Caco-2 (cell line): ENCODE measurements at regions of chr12 and their contacts with region 1.

Region 1: GRCh38 chr12:6965026-6965661 is 5.3 kb downstream of the PHB2 start:
- DNase-seq: peak; percentile 91 to 93
- H3K4me3 ChIP-seq: peak overlapping the region; percentile 64
- H3K4me3 Mint-ChIP-seq: peak overlapping the region; percentile 81
- H3K27ac Mint-ChIP-seq: peak overlapping the region; percentile 93
- H3K4me1 ChIP-seq: peaks cover 39% of the 10 kb centered on the region
- H3K4me1 Mint-ChIP-seq: peaks cover 37% of the 10 kb centered on the region
- H3K27me3 ChIP-seq: no peaks in the 10 kb centered on the region
- H3K27me3 Mint-ChIP-seq: no peaks in the 10 kb centered on the region
- CTCF ChIP-seq: peak; percentile 95 to 96

Region 2: GRCh38 chr12:6735448-6736191 is 229.5 kb before region 1 on chr12:
- CTCF ChIA-PET with region 1: no interaction called
- POLR2A ChIA-PET with region 1: no interaction called
- intact Hi-C with region 1: no loop called
- DNase-seq: peak; percentile 70 to 81
- H3K4me3 ChIP-seq: no peak overlapping the region
- H3K4me3 Mint-ChIP-seq: no peak overlapping the region
- H3K27ac Mint-ChIP-seq: peak overlapping the region; percentile 24
- H3K4me1 ChIP-seq: no peaks in the 10 kb centered on the region
- H3K4me1 Mint-ChIP-seq: peaks cover 8% of the 10 kb centered on the region
- H3K27me3 ChIP-seq: no peaks in the 10 kb centered on the region
- H3K27me3 Mint-ChIP-seq: no peaks in the 10 kb centered on the region
- CTCF ChIP-seq: peak; percentile 94

Region 3: GRCh38 chr12:6867413-6868210 is 97.5 kb before region 1 on chr12 and contains the start of gene TPI1:
- CTCF ChIA-PET with region 1: interaction called, 19 read pairs
- POLR2A ChIA-PET with region 1: interaction called, 3 read pairs
- intact Hi-C with region 1: no loop called
- DNase-seq: peak; percentile 88 to 92
- H3K4me3 ChIP-seq: peak within 1 kb of the TSS; percentile 97
- H3K4me3 Mint-ChIP-seq: peak within 1 kb of the TSS; percentile 95
- H3K27ac Mint-ChIP-seq: peak within 1 kb of the TSS; percentile 94
- H3K4me1 ChIP-seq: peaks cover 31% of the 10 kb centered on the region
- H3K4me1 Mint-ChIP-seq: peaks cover 47% of the 10 kb centered on the region
- H3K27me3 ChIP-seq: no peaks in the 10 kb centered on the region
- H3K27me3 Mint-ChIP-seq: no peaks in the 10 kb centered on the region
- CTCF ChIP-seq: no peak
- total RNA-seq, gene TPI1: 1,141 and 1,254 TPM in 2 replicates

Region 4: GRCh38 chr12:6890789-6891645 is 74.1 kb before region 1 on chr12:
- CTCF ChIA-PET with region 1: interaction called, 6 read pairs
- POLR2A ChIA-PET with region 1: no interaction called
- intact Hi-C with region 1: loop called (anchors 1 kb)
- DNase-seq: peak; percentile 98 to 100
- H3K4me3 ChIP-seq: peak overlapping the region; percentile 34
- H3K4me3 Mint-ChIP-seq: peak overlapping the region; percentile 80
- H3K27ac Mint-ChIP-seq: peak overlapping the region; percentile 96
- H3K4me1 ChIP-seq: peaks cover 37% of the 10 kb centered on the region
- H3K4me1 Mint-ChIP-seq: peaks cover 5% of the 10 kb centered on the region
- H3K27me3 ChIP-seq: no peaks in the 10 kb centered on the region
- H3K27me3 Mint-ChIP-seq: no peaks in the 10 kb centered on the region
- CTCF ChIP-seq: peak; percentile 82 to 95

Region 5: GRCh38 chr12:6937481-6938297 is 27.5 kb before region 1 on chr12:
- CTCF ChIA-PET with region 1: interaction called, 241 read pairs
- POLR2A ChIA-PET with region 1: interaction called, 9 read pairs
- intact Hi-C with region 1: no loop called
- DNase-seq: peak; percentile 97
- H3K4me3 ChIP-seq: peak overlapping the region; percentile 55
- H3K4me3 Mint-ChIP-seq: peak overlapping the region; percentile 73
- H3K27ac Mint-ChIP-seq: peak overlapping the region; percentile 92
- H3K4me1 ChIP-seq: peaks cover 10% of the 10 kb centered on the region
- H3K4me1 Mint-ChIP-seq: peaks cover 25% of the 10 kb centered on the region
- H3K27me3 ChIP-seq: no peaks in the 10 kb centered on the region
- H3K27me3 Mint-ChIP-seq: no peaks in the 10 kb centered on the region
- CTCF ChIP-seq: peak; percentile 98 to 99

Region 6: GRCh38 chr12:7018350-7019042 is 53.4 kb after region 1 on chr12 and contains the start of gene LPCAT3:
- CTCF ChIA-PET with region 1: interaction called, 10 read pairs
- POLR2A ChIA-PET with region 1: interaction called, 9 read pairs
- intact Hi-C with region 1: loop called (anchors 1 kb)
- DNase-seq: peak; percentile 99 to 100
- H3K4me3 ChIP-seq: peak within 1 kb of the TSS; percentile 65
- H3K4me3 Mint-ChIP-seq: peak within 1 kb of the TSS; percentile 88
- H3K27ac Mint-ChIP-seq: peak within 1 kb of the TSS; percentile 72
- H3K4me1 ChIP-seq: peaks cover 19% of the 10 kb centered on the region
- H3K4me1 Mint-ChIP-seq: peaks cover 22% of the 10 kb centered on the region
- H3K27me3 ChIP-seq: no peaks in the 10 kb centered on the region
- H3K27me3 Mint-ChIP-seq: no peaks in the 10 kb centered on the region
- CTCF ChIP-seq: peak; percentile 95 to 96
- total RNA-seq, gene LPCAT3: 142 and 155 TPM in 2 replicates

Region 7: DNA sequence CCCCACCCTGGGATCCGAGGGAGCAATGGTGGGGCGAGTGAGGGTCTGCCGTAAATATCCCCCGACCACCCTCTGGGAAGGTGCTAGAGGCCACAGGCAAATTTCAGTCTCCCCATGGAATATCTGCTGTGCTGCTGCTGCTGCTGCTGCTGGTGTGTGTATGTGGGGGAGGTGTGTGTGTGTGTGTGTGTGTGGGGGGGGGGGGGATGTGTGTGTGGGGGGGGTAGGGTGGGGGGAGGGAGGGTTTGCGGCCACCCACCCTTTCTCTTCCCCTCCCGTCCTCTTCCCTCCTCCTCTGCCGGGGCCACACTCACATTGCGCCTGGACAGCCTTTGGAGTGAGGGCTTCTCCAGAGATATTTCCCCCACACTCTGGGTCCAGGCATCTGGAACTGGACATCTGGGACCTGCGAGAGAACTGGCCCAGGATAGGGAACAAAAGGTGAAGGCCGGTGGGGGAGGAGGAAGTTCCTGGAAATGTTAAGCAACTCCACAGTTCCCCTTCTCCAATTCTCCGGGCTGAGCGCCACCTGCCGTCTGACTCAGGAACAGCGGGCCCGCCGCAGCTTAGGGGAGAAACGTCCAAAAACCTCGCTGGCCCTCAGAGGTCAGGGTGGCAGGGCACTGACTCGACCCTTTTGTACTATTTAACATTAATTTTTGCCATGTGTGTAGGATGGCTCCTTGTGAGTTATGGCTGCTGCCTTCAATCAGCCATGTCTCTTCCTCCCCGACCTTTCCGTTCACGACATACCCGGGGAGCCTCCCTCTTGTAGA is 143.8 kb after region 1 on chr12 and contains the start of gene C1RL:
- CTCF ChIA-PET with region 1: interaction called, 7 read pairs
- POLR2A ChIA-PET with region 1: interaction called, 6 read pairs
- intact Hi-C with region 1: loop called (anchors 1 kb)
- DNase-seq: peak; percentile 92 to 96
- H3K4me3 ChIP-seq: peak within 1 kb of the TSS; percentile 80
- H3K4me3 Mint-ChIP-seq: peak within 1 kb of the TSS; percentile 85
- H3K27ac Mint-ChIP-seq: peak within 1 kb of the TSS; percentile 74
- H3K4me1 ChIP-seq: no peaks in the 10 kb centered on the region
- H3K4me1 Mint-ChIP-seq: peaks cover 12% of the 10 kb centered on the region
- H3K27me3 ChIP-seq: no peaks in the 10 kb centered on the region
- H3K27me3 Mint-ChIP-seq: no peaks in the 10 kb centered on the region
- CTCF ChIP-seq: peak; percentile 98 to 99
- total RNA-seq, gene C1RL: 38.7 and 40.2 TPM in 2 replicates

Region 8: GRCh38 chr12:7705831-7706230 is 740.7 kb after region 1 on chr12:
- CTCF ChIA-PET with region 1: no interaction called
- POLR2A ChIA-PET with region 1: no interaction called
- intact Hi-C with region 1: no loop called
- DNase-seq: peak; percentile 96 to 98
- H3K4me3 ChIP-seq: peak overlapping the region; percentile 43
- H3K4me3 Mint-ChIP-seq: peak overlapping the region; percentile 81
- H3K27ac Mint-ChIP-seq: peak overlapping the region; percentile 99
- H3K4me1 ChIP-seq: peaks cover 58% of the 10 kb centered on the region
- H3K4me1 Mint-ChIP-seq: peaks cover 45% of the 10 kb centered on the region
- H3K27me3 ChIP-seq: no peaks in the 10 kb centered on the region
- H3K27me3 Mint-ChIP-seq: no peaks in the 10 kb centered on the region
- CTCF ChIP-seq: no peak